ENCODE measurements at regions of chr7 and their contacts with region 1.

Region 1: GRCh38 chr7:816300-816750 is 16.0 kb upstream of the SUN1 start:
- DNase-seq: peak; percentile 95 to 98 (median 97)
- ATAC-seq: peak; percentile 98
- H3K4me3 ChIP-seq: peak overlapping the region; percentile 52
- H3K4me3 Mint-ChIP-seq: peak overlapping the region; percentile 60 to 98 (median 88)
- H3K27ac ChIP-seq: peak overlapping the region; percentile 59
- H3K27ac Mint-ChIP-seq: peak overlapping the region in 3 of 9 donors; percentile 9 to 85 (median 65)
- H3K4me1 ChIP-seq: peaks cover 27 to 32% of the 10 kb centered on the region in 2 donors
- H3K4me1 Mint-ChIP-seq: peaks cover 45 to 72% (median 61%) of the 10 kb centered on the region in 7 donors
- H3K27me3 ChIP-seq: no peaks in the 10 kb centered on the region
- H3K27me3 Mint-ChIP-seq: peaks cover 0 to 42% (median 0%) of the 10 kb centered on the region in 5 donors

Region 2: DNA sequence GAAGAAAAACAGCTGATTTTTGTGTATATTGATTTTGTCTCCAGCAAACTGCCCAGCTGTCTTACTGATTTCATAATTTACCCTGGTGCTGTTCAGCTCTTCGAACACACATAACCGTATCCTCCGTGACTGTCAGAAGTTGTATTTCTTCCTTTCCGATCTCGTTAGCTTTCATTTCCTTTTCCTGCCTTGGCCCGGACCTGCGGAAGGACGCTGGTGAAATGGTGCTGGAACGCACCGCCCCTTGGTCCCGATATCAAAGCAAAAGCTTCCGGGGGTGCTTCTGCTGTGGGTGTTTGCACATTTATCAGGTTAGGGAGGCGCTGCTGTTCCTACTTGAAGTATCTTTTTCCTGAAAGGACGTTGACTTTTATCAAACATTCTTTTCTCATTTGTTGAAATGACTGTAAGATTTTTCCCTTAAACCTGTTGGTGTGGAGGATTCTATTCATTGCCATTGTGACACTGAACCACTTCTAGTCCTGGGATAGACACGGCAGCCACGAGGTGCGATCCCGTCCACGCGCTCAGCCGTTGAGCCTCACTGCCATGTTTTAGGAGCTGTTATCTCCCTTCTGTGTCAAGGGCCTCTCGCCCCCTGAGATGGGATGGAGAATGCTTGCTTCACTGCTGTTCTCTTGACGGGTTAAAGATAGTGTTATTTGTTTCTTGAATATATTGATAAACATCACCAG is 453.8 kb before region 1 on chr7:
- CTCF ChIA-PET with region 1: no interaction called
- POLR2A ChIA-PET with region 1: interaction called, 3 read pairs
- intact Hi-C with region 1: loop called in 1 of 2 experiments (anchors 5 kb)
- DNase-seq: peak in 7 of 9 donors; percentile 57 to 70 (median 61)
- ATAC-seq: peak; percentile 68
- H3K4me3 ChIP-seq: peak overlapping the region; percentile 38
- H3K4me3 Mint-ChIP-seq: peak overlapping the region; percentile 71 to 85 (median 76)
- H3K27ac ChIP-seq: peak overlapping the region; percentile 68
- H3K27ac Mint-ChIP-seq: peak overlapping the region; percentile 86 to 98 (median 94)
- H3K4me1 ChIP-seq: peaks cover 29 to 72% of the 10 kb centered on the region in 2 donors
- H3K4me1 Mint-ChIP-seq: peaks cover 52 to 89% (median 73%) of the 10 kb centered on the region in 7 donors
- H3K27me3 ChIP-seq: no peaks in the 10 kb centered on the region
- H3K27me3 Mint-ChIP-seq: peaks cover 0 to 5% (median 0%) of the 10 kb centered on the region in 5 donors

Region 3: DNA sequence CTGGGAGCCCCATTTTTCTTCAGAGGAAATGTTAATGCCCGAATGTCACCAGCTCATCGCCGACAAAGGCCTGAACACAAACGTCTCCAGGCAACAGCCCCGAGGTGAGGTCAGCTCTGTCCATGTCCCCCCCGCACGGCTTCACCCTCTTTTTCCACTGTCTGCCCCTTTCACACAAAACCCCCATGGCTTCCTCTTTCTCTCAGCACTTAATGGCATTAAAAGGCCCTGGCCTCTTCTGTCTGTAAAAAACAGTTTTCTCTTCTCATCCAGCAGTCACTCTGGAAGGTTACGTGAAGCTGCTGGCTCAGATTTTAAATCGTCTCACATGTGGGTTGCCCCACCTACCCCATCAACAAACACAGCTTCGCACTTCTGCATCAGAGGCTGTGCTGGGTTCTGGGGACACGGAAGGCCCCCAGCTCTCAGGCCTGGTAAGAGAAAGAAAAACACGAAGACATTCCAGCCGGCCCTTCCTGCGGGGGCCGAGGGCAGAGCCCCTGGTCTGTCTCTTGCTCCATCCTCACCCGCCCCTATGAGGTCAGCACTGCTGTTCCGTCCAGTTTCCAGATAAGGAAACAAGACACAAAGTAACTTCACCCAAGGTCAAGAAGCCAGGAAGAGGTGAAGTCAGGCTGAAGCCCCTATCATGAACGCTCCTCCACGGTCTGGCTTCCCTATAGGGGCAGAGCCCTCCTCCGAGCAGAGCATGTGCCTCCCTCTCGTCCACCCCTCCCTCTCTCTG is 205.6 kb before region 1 on chr7:
- CTCF ChIA-PET with region 1: no interaction called
- POLR2A ChIA-PET with region 1: no interaction called
- intact Hi-C with region 1: loop called in 1 of 2 experiments (anchors 10 kb)
- DNase-seq: peak in 4 of 9 donors; percentile 18 to 60 (median 42)
- ATAC-seq: peak; percentile 78
- H3K4me3 ChIP-seq: no peak overlapping the region
- H3K4me3 Mint-ChIP-seq: peak overlapping the region in 9 of 10 donors; percentile 19 to 75 (median 68)
- H3K27ac ChIP-seq: peak overlapping the region; percentile 52
- H3K27ac Mint-ChIP-seq: peak overlapping the region; percentile 26 to 98 (median 92)
- H3K4me1 ChIP-seq: peaks cover under 1 to 46% of the 10 kb centered on the region in 2 donors
- H3K4me1 Mint-ChIP-seq: peaks cover 29 to 87% (median 63%) of the 10 kb centered on the region in 7 donors
- H3K27me3 ChIP-seq: no peaks in the 10 kb centered on the region
- H3K27me3 Mint-ChIP-seq: no peaks in the 10 kb centered on the region

Region 4: GRCh38 chr7:786472-787255 is 29.7 kb before region 1 on chr7:
- CTCF ChIA-PET with region 1: interaction called, 3 read pairs
- POLR2A ChIA-PET with region 1: interaction called, 4 read pairs
- intact Hi-C with region 1: loop called in 1 of 2 experiments (anchors 1 kb)
- DNase-seq: peak; percentile 44 to 77 (median 63)
- ATAC-seq: peak; percentile 91
- H3K4me3 ChIP-seq: no peak overlapping the region
- H3K4me3 Mint-ChIP-seq: no peak overlapping the region
- H3K27ac ChIP-seq: no peak overlapping the region
- H3K27ac Mint-ChIP-seq: peak overlapping the region in 1 of 9 donors; percentile 15
- H3K4me1 ChIP-seq: no peaks in the 10 kb centered on the region
- H3K4me1 Mint-ChIP-seq: peaks cover 0 to 2% (median 0%) of the 10 kb centered on the region in 7 donors
- H3K27me3 ChIP-seq: no peaks in the 10 kb centered on the region
- H3K27me3 Mint-ChIP-seq: no peaks in the 10 kb centered on the region

Region 5: DNA sequence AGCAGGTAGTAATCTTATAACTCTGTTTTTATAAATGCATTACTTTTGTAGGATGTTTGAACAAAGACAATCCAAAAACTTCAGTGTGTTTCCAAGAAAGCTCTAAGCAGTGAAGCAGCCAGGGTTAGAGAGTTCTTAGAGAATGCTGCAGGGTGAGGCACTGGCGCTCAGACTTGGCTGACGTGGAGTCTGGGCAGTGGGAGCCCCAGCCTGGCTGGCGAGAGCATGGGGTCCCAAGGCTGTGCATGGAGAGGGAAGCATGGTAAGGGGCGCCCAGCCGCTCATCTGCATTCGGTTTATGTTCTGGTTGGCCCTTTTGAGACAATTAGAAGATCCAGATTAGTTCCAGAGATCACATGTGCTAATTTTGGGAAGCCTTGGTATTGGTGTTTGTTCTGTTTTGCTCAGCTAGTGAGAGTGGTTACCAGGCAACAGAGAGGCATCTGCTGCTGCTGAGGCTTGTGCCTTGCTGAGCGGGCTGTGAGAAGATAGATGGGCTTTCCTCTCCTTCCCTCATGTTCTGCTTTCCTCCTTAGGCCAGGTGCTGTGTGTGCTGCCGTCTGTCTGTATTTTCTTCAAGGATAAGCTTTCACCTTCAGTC is 26.2 kb after region 1 on chr7:
- CTCF ChIA-PET with region 1: no interaction called
- POLR2A ChIA-PET with region 1: no interaction called
- intact Hi-C with region 1: no loop called
- DNase-seq: no peak
- ATAC-seq: no peak
- H3K4me3 ChIP-seq: no peak overlapping the region
- H3K4me3 Mint-ChIP-seq: no peak overlapping the region
- H3K27ac ChIP-seq: no peak overlapping the region
- H3K27ac Mint-ChIP-seq: no peak overlapping the region
- H3K4me1 ChIP-seq: no peaks in the 10 kb centered on the region
- H3K4me1 Mint-ChIP-seq: peaks cover 0 to 2% (median 0%) of the 10 kb centered on the region in 7 donors
- H3K27me3 ChIP-seq: no peaks in the 10 kb centered on the region
- H3K27me3 Mint-ChIP-seq: no peaks in the 10 kb centered on the region

Region 6: DNA sequence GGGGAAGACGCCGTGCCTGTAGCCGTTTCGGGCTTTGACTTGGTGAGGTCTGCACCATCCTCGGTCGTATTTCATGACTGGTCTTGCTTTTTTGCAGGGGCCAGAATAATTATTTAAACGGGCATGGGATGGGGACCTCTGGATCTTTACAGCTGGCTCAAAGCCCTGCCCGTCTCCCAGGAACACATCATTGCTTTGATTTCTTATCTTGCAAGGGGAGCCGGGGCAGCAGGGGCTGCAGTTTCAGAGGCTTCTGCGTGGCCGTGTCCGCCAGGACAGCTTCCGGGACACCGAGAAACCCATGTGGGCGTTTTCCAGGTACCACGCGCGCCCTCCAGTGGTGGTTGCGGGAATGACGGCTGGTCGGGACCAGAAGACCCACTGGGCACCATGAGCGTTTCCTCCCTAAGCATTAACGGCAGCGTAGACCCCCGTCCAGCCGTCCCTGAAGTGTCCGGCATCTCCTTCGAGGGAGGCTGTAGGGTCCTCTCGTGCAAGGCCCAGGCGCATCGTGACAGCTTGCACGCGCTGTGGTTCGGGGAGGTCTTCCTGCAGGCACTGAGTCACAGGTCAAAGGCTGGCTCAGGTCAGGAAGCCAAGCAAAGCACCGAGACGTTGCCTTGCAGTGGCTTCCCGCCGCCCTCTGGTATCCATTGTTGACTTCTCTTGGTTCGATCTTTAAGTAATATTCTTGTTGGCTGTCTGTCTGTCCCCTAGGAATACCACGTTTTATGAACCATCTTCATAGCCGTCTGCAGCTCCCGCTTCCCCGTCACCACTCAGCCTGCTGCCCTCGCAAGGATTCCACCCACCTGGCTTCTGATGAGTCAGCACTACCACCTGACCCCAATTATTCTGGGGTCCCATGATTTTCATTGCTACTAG is 359.9 kb after region 1 on chr7:
- CTCF ChIA-PET with region 1: interaction called, 3 read pairs
- POLR2A ChIA-PET with region 1: no interaction called
- intact Hi-C with region 1: loop called in 1 of 2 experiments (anchors 10 kb)
- DNase-seq: peak; percentile 38 to 88 (median 64)
- ATAC-seq: peak; percentile 81
- H3K4me3 ChIP-seq: peak overlapping the region; percentile 47
- H3K4me3 Mint-ChIP-seq: peak overlapping the region in 8 of 10 donors; percentile 32 to 78 (median 53)
- H3K27ac ChIP-seq: no peak overlapping the region
- H3K27ac Mint-ChIP-seq: peak overlapping the region in 1 of 9 donors; percentile 42
- H3K4me1 ChIP-seq: peaks cover 6 to 10% of the 10 kb centered on the region in 2 donors
- H3K4me1 Mint-ChIP-seq: peaks cover 7 to 15% (median 11%) of the 10 kb centered on the region in 7 donors
- H3K27me3 ChIP-seq: no peaks in the 10 kb centered on the region
- H3K27me3 Mint-ChIP-seq: peaks cover 11 to 19% (median 18%) of the 10 kb centered on the region in 5 donors